CD14-positive monocyte (primary cell): ENCODE measurements at regions of chr10 and their contacts with region 1.

Region 1: DNA sequence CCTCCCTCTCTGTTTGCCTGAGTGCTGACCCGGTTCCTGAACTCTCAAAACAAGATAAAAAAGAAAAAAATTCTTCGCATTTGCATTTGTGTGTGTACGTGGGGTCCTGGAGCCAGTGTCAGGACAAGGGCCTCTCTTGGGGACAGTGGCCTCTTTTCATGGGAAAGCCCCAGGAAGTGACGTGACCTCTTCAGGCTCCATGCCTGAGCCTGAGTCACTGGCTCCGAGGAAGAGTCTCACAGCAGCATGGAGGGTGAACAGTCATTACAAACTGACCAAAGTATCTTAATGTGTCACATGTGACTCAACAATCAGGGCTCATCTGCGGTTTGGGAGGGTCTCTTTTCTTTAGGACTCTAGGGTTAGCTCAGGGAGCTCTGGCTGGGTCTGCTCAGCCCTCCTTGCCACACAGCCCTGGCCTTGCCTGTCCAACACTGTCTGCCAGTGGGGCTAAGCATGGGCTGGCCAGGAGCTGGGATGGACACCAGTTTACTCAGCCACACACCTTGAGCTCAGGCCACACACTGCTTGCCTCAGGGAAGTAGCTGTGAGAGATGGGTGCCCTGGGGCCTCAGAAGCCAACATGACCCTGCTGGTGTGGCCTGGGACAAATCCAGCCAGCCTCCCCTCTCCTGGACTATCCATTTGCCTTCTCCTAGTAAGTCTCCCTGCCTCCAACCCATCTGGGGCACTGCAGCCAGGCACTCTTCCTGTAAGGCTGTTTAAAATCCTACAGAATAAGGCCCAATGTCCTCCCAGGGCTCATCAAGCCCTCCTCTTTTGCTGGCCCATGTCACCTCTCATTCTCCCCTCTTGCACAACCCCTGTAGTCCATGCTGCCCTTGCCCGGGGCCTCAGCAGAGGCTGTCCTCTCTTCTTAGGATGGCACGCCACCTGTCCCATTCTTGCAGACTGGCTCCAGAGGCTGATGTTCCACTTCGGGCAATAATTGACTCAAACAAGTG is 10.5 kb downstream of the TMEM273 start:
- DNase-seq: peak; percentile 96 to 99 (median 98)
- H3K4me3 ChIP-seq: no peak overlapping the region
- H3K4me3 Mint-ChIP-seq: peak overlapping the region; percentile 65 to 79
- H3K27ac ChIP-seq: peak overlapping the region; percentile 74 to 93
- H3K27ac Mint-ChIP-seq: peak overlapping the region; percentile 95 to 99 (median 96)
- H3K4me1 ChIP-seq: peaks cover 38 to 43% of the 10 kb centered on the region in 2 donors
- H3K4me1 Mint-ChIP-seq: peaks cover 55% of the 10 kb centered on the region
- H3K27me3 ChIP-seq: no peaks in the 10 kb centered on the region
- H3K27me3 Mint-ChIP-seq: peaks cover 0 to 11% (median 3%) of the 10 kb centered on the region in 3 donors
- CTCF ChIP-seq: no peak

Region 2: DNA sequence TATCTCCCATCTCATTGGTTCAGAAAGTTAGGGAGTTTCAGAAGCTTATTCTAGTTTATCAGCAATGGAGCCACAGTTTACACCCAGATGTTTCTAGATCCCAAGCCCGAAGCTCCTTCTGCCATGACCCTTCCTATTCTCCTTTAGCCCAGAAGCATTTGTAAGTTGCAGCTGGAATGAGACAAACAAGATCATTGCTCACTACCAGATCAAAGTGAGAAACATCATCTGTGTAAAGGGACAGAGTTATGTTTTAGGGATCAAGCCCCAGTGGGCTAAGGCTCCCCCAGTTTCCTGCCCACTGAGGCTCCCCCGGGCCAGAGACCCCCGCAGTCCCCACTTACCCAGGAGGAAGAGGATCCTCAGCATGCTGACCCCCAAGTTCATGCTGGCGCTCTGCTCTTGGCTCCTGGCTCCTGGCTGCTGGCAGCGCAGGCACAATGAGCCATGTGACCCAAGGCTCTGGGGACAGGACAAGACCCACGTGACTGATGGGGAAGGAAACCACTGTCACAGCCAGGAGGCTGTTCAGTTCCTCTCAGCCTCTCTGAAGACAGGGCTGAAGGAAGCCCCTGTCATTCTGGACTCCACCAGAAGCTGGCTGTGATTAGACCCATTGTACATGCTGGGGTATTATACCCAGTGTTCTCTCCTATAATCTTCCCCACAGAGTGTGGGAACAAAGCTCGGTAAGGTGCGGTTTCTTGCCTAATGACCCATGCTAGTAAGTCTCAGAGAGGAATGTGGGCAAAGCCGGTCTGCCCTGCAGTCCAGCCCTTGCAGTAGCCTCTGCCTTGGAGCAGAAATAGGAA is 10.5 kb after region 1 on chr10 and contains the start of gene TMEM273:
- intact Hi-C with region 1: loop called in 1 of 2 experiments (anchors 1 kb)
- DNase-seq: peak; percentile 88 to 95 (median 93)
- H3K4me3 ChIP-seq: peak within 1 kb of the TSS; percentile 0 to 63 (median 32)
- H3K4me3 Mint-ChIP-seq: peak within 1 kb of the TSS; percentile 59 to 76
- H3K27ac ChIP-seq: peak within 1 kb of the TSS; percentile 85 to 90
- H3K27ac Mint-ChIP-seq: peak within 1 kb of the TSS; percentile 92 to 98 (median 96)
- H3K4me1 ChIP-seq: peaks cover 72 to 75% of the 10 kb centered on the region in 2 donors
- H3K4me1 Mint-ChIP-seq: peaks cover 74% of the 10 kb centered on the region
- H3K27me3 ChIP-seq: no peaks in the 10 kb centered on the region
- H3K27me3 Mint-ChIP-seq: peaks cover 0 to 2% (median 0%) of the 10 kb centered on the region in 3 donors
- CTCF ChIP-seq: no peak
- polyA plus RNA-seq, gene TMEM273: 6.7 to 7.9 (median 6.9) TPM